GM12878 (cell line): ENCODE measurements at regions of chr19 and their contacts with region 1.

Region 1: DNA sequence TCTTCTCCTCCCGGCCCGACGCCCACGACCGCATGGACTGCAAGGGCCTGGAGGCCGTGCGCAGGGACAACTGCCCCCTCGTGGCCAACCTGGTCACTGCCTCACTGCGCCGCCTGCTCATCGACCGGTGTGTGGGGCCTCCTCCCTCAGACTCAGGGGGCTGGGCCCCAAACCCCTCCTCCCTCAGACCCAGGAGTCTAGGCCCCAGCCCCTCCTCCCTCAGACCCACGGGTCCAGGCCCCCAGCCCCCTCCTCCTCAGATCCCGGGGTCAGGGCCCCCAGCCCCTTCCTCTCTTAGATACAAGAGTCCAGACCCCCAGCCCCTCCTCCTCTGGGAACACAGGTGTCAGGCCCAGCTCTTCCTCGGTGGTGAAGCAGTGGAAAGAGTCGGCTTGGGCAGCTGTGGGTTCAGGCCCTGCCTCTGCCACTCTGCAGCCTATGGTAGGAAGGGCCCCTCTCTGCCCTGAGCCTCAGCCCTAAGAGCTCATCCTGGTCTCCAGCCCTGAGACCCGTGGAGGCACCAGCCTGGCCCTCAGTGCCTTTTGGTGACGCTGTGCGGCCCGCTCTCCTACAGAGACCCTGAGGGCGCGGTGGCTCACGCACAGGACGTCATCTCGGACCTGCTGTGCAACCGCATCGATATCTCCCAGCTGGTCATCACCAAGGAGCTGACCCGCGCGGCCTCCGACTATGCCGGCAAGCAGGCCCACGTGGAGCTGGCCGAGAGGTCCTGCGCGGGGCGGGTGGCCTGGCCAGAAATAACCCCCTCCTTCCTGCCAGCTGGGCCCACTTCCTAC is 3.7 kb upstream of the SPIB start:
- DNase-seq: no peak
- ATAC-seq: peak; percentile 68
- H3K4me3 ChIP-seq: peak overlapping the region; percentile 22
- H3K27ac ChIP-seq: peak overlapping the region; percentile 95
- H3K4me1 ChIP-seq: peaks cover 35% of the 10 kb centered on the region
- H3K27me3 ChIP-seq: no peaks in the 10 kb centered on the region
- CTCF ChIP-seq: peak; percentile 85 to 94 (median 89)
- EP300 ChIP-seq: no peak
- POLR2A ChIP-seq: peak; percentile 73; the same call in 1 of the 2 replicates
- RAD21 ChIP-seq: peak; percentile 64

Region 2: DNA sequence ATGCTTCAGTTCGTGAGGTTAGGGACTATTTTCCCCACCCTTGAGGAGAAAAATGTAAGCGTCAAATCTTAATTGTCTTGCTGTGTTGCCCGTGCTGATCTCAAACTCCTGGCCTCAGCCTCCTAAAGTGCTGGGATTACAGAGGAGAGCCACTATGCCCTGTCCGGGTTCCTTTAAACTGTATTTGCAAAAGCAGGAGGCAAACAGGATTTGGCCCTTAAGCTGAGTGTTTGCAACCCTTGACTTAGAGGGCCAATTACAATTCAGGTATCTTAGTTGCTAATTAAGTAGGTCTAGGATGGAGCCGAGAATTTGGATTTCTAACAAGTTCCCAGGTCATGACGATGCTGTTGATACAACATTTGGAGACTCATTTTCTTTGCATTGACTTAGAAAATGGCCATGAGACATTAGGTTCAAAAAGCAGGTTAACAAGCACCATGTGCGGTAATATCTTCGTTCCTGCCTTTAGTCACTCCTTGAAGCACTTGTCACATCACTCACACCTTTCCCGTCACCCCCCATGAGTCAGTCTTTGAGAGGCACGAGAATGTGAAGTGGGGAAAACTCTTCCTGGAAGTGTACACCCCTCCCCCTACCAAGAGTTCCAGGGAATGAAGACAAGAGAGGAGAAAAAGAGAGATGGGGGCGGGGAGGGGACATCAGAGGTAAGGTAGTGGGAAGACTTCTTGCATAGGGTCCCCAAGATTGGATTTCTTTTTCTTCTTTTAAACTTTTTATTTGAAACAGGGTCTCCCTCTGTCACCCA is 52.2 kb before region 1 on chr19:
- CTCF ChIA-PET with region 1: interaction called, 28 read pairs
- POLR2A ChIA-PET with region 1: interaction called, 18 read pairs
- RAD21 ChIA-PET with region 1: interaction called, 18 read pairs
- SMC1A ChIA-PET with region 1: interaction called, 11 read pairs
- in situ Hi-C with region 1: no loop called
- intact Hi-C with region 1: loop called (anchors 2 kb)
- DNase-seq: no peak
- ATAC-seq: no peak
- H3K4me3 ChIP-seq: no peak overlapping the region
- H3K27ac ChIP-seq: no peak overlapping the region
- H3K4me1 ChIP-seq: peaks cover 64% of the 10 kb centered on the region
- H3K27me3 ChIP-seq: no peaks in the 10 kb centered on the region
- CTCF ChIP-seq: no peak
- EP300 ChIP-seq: no peak
- POLR2A ChIP-seq: no peak
- RAD21 ChIP-seq: no peak

Region 3: GRCh38 chr19:50368649-50369570 is 46.2 kb before region 1 on chr19:
- CTCF ChIA-PET with region 1: interaction called, 23 read pairs
- POLR2A ChIA-PET with region 1: interaction called, 6 read pairs
- RAD21 ChIA-PET with region 1: interaction called, 13 read pairs
- SMC1A ChIA-PET with region 1: interaction called, 4 read pairs
- in situ Hi-C with region 1: no loop called
- intact Hi-C with region 1: loop called (anchors 2 kb)
- DNase-seq: peak; percentile 78
- ATAC-seq: peak; percentile 86
- H3K4me3 ChIP-seq: peak overlapping the region; percentile 93
- H3K27ac ChIP-seq: peak overlapping the region; percentile 82
- H3K4me1 ChIP-seq: peaks cover 19% of the 10 kb centered on the region
- H3K27me3 ChIP-seq: no peaks in the 10 kb centered on the region
- CTCF ChIP-seq: peak; percentile 79 to 81 (median 79)
- EP300 ChIP-seq: no peak
- POLR2A ChIP-seq: peak; percentile 69
- RAD21 ChIP-seq: peak; percentile 77

Region 4: GRCh38 chr19:50383852-50384684 is 31.0 kb before region 1 on chr19 and contains the start of gene POLD1:
- CTCF ChIA-PET with region 1: interaction called, 17 read pairs
- POLR2A ChIA-PET with region 1: interaction called, 9 read pairs
- RAD21 ChIA-PET with region 1: interaction called, 5 read pairs
- SMC1A ChIA-PET with region 1: interaction called, 6 read pairs
- in situ Hi-C with region 1: no loop called
- intact Hi-C with region 1: loop called (anchors 2 kb)
- DNase-seq: peak; percentile 91
- ATAC-seq: peak; percentile 94
- H3K4me3 ChIP-seq: peak within 1 kb of the TSS; percentile 77
- H3K27ac ChIP-seq: peak within 1 kb of the TSS; percentile 78
- H3K4me1 ChIP-seq: peaks cover 3% of the 10 kb centered on the region; the same call in 1 of the 2 replicates
- H3K27me3 ChIP-seq: no peaks in the 10 kb centered on the region
- CTCF ChIP-seq: no peak
- EP300 ChIP-seq: no peak
- POLR2A ChIP-seq: peak; percentile 89
- RAD21 ChIP-seq: no peak
- polyA plus RNA-seq, gene POLD1: 0.76 to 6.5 TPM

Region 5: DNA sequence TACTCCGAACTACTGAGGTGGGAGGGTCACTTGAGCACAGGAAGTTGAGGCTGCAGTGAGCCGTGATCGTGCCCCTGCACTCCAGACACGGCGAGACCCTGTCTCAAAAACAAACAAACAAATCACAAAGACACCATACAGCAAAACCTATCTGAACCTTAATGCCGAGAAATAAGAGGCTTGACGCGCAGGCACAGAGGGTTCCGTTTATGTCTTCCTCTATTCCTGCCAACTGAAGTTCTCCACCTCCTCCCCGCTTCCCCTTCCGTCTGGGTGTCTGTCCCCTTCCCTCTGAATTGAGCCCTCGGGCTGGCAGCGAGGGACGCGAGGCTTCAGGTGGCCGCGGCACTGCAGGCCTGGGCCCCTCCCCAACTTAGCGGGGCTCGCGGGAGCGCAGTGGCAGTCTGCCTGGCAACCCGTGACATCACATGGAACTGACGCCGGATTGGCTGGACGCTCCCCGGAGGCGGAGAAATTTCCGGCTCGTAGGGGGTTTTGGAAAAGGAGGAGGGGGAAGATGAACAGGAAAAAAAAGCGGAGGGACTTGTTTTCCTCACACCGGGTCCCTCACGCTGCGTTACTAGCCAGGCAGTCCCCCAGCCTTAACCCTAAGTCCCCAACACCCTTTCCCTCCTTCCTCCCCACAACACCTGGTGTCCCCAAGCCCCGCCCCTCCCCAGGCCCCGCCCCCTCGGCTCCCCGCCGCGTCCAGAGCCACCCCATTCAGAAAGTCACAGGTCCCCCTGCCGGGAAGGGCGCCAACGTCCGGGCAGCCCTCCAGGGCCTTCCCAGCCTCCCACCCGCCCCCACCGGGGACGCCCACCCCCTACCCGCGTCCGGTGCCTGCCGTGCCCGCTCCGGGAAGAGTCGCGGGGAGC is 16.5 kb after region 1 on chr19:
- CTCF ChIA-PET with region 1: interaction called, 6 read pairs
- POLR2A ChIA-PET with region 1: interaction called, 26 read pairs
- RAD21 ChIA-PET with region 1: interaction called, 5 read pairs
- SMC1A ChIA-PET with region 1: interaction called, 4 read pairs
- in situ Hi-C with region 1: no loop called
- intact Hi-C with region 1: loop called (anchors 2 kb)
- DNase-seq: peak; percentile 61
- ATAC-seq: peak; percentile 86
- H3K4me3 ChIP-seq: peak overlapping the region; percentile 57; the same call in 1 of the 2 replicates
- H3K27ac ChIP-seq: peak overlapping the region; percentile 82
- H3K4me1 ChIP-seq: peaks cover 58% of the 10 kb centered on the region
- H3K27me3 ChIP-seq: peaks cover 0 to under 1% of the 10 kb centered on the region in 2 experiments; a peak in 1 of 4 replicates
- CTCF ChIP-seq: no peak
- EP300 ChIP-seq: 0 out of 4 replicates have a peak, but pooled peaks of 1 of the 2 experiments have one; percentile 23
- POLR2A ChIP-seq: peak; percentile 71
- RAD21 ChIP-seq: no peak